Heart left ventricle (tissue), 16 donors: ENCODE measurements at regions of chr1 and their contacts with region 1.

Region 1: GRCh38 chr1:243748706-243749283 is 101.2 kb downstream of the AKT3 start:
- DNase-seq: peak in 1 of 5 donors; percentile 24
- ATAC-seq: peak; percentile 78 to 91 (median 88)
- H3K4me3 ChIP-seq: no peak overlapping the region
- H3K27ac ChIP-seq: no peak overlapping the region
- H3K4me1 ChIP-seq: peaks cover 0 to 24% (median 6%) of the 10 kb centered on the region in 12 donors
- H3K27me3 ChIP-seq: no peaks in the 10 kb centered on the region
- CTCF ChIP-seq: peak; percentile 67 to 88 (median 82)
- POLR2A ChIP-seq: no peak

Region 2: DNA sequence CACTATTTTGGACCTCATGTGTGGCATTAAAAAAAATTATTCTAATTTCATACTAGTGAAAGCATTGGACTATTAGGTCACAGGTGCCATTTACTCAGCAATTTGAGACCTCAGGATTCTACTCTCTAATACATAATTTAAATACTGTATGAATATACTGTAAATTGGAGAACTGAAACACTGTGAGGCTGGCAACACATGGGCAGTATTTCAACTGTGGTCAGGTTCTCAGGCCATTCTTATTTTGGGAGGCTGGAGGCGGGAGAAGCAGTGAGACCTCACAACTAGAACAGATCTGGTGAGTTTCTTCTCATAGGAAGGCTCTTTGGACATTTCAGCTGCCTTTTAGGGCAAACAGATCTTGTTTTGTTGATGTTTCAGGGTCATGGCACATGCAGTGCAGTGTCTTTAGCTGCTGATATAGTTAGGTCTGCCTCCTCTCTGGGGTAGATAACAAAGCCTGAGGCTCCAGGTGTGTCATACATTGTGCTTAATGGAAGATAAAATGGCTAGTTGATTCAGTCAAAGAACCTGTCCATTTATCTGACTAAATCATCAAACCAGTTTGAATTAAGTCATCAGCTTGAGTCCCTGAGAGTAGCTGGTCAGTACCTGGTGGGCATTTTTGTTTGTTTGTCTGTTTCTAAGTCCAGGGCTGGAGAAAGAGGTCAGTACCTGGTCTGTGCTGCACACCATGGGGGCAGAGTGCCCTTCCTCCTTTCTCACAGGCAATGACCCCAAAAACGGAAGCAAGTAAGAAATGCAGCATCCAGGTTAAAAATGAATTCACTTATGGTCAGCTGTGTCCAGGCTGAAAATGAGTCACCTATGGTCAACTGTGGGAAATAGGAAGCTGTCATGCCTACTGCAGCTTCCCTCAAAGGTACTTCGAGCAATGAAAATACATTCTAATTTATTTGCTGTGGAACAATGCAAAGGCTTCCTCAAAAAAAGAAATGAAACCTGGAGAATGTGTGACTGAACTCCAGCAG is 276.7 kb before region 1 on chr1:
- intact Hi-C with region 1: loop called in 1 of 10 experiments (anchors 10 kb)
- DNase-seq: no peak
- ATAC-seq: peak in 1 of 4 donors; percentile 41
- H3K4me3 ChIP-seq: no peak overlapping the region
- H3K27ac ChIP-seq: peak overlapping the region in 1 of 12 donors; percentile 23
- H3K4me1 ChIP-seq: peaks cover 0 to 23% (median 7%) of the 10 kb centered on the region in 12 donors
- H3K27me3 ChIP-seq: no peaks in the 10 kb centered on the region
- CTCF ChIP-seq: no peak
- POLR2A ChIP-seq: no peak

Region 3: GRCh38 chr1:243850452-243851256 is 101.9 kb after region 1 on chr1:
- intact Hi-C with region 1: loop called in 1 of 10 experiments (anchors 10 kb)
- DNase-seq: peak; percentile 80 to 87 (median 83)
- ATAC-seq: peak; percentile 22 to 70 (median 66)
- H3K4me3 ChIP-seq: peak overlapping the region; percentile 73 to 90 (median 80)
- H3K27ac ChIP-seq: peak overlapping the region; percentile 90 to 98 (median 94)
- H3K4me1 ChIP-seq: peaks cover 0 to 24% (median 8%) of the 10 kb centered on the region in 12 donors
- H3K27me3 ChIP-seq: peaks cover 0 to 24% (median 0%) of the 10 kb centered on the region in 9 donors
- CTCF ChIP-seq: no peak
- POLR2A ChIP-seq: peak in 1 of 2 donors; percentile 24